ENCODE measurements at regions of chr5 and their contacts with region 1.

Region 1: GRCh38 chr5:178288381-178289368 is 56.1 kb upstream of the PHYKPL start:
- DNase-seq: peak in 1 of 5 donors; percentile 33
- ATAC-seq: no peak
- H3K4me3 ChIP-seq: no peak overlapping the region
- H3K27ac ChIP-seq: no peak overlapping the region
- H3K4me1 ChIP-seq: peaks cover 0 to 11% (median 1%) of the 10 kb centered on the region in 12 donors
- H3K27me3 ChIP-seq: peaks cover 0 to 21% (median 0%) of the 10 kb centered on the region in 9 donors
- CTCF ChIP-seq: no peak
- POLR2A ChIP-seq: no peak

Region 2: GRCh38 chr5:178324481-178325310 is 36.0 kb after region 1 on chr5:
- intact Hi-C with region 1: loop called in 2 of 10 experiments (anchors 2 to 5 kb)
- DNase-seq: peak in 1 of 5 donors; percentile 9
- ATAC-seq: no peak
- H3K4me3 ChIP-seq: no peak overlapping the region
- H3K27ac ChIP-seq: no peak overlapping the region
- H3K4me1 ChIP-seq: peaks cover 0 to 6% (median 0%) of the 10 kb centered on the region in 12 donors
- H3K27me3 ChIP-seq: no peaks in the 10 kb centered on the region
- CTCF ChIP-seq: no peak
- POLR2A ChIP-seq: no peak

Region 3: GRCh38 chr5:178542455-178542854 is 253.8 kb after region 1 on chr5:
- intact Hi-C with region 1: loop called in 2 of 10 experiments (anchors 5 kb)
- DNase-seq: peak in 3 of 5 donors; percentile 42 to 58 (median 48)
- ATAC-seq: peak; percentile 12 to 38 (median 31)
- H3K4me3 ChIP-seq: no peak overlapping the region
- H3K27ac ChIP-seq: peak overlapping the region; percentile 59 to 97 (median 91)
- H3K4me1 ChIP-seq: peaks cover 0 to 49% (median 26%) of the 10 kb centered on the region in 12 donors
- H3K27me3 ChIP-seq: no peaks in the 10 kb centered on the region
- CTCF ChIP-seq: no peak
- POLR2A ChIP-seq: no peak